Activated CD8-positive, alpha-beta T cell treated with anti-CD3 and anti-CD28 coated beads, Interleukin-2, amount 10 ng/mL, durations not matched to agents 7 days and 5 days (primary cell): ENCODE measurements at regions of chr17 and their contacts with region 1.

Region 1: GRCh38 chr17:49997791-49998703 is 3.0 kb upstream of the DLX3 start:
- DNase-seq: peak; percentile 92
- ATAC-seq: peak; percentile 86
- H3K4me3 Mint-ChIP-seq: no peak overlapping the region
- H3K27ac Mint-ChIP-seq: no peak overlapping the region
- H3K4me1 Mint-ChIP-seq: peaks cover 29% of the 10 kb centered on the region
- H3K27me3 Mint-ChIP-seq: peaks cover 57% of the 10 kb centered on the region

Region 2: GRCh38 chr17:49556223-49556971 is 441.6 kb before region 1 on chr17:
- CTCF ChIA-PET with region 1: interaction called, 39 read pairs
- POLR2A ChIA-PET with region 1: no interaction called
- DNase-seq: peak; percentile 88
- ATAC-seq: peak; percentile 96
- H3K4me3 Mint-ChIP-seq: no peak overlapping the region
- H3K27ac Mint-ChIP-seq: no peak overlapping the region
- H3K4me1 Mint-ChIP-seq: peaks cover 11% of the 10 kb centered on the region
- H3K27me3 Mint-ChIP-seq: peaks cover 15% of the 10 kb centered on the region

Region 3: DNA sequence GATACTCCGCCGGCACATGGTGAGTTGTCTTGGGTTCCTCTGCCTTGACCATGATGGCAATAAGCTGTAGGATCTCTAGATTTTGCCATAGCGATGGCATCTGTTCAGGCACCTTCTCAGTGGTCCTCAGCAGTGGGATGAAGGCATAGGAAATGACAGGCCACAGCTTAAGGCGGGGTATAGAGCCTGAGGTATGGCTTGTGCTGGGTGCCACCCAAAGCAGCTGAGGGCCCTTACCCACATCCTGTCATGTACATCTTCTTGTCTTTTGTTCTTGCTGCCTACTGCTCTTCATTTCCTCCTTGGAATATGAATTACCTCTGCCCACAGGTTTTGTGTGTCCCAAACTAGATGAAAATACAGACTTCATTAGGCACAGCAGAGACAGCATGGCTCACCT is 180.1 kb before region 1 on chr17:
- CTCF ChIA-PET with region 1: interaction called, 11 read pairs
- POLR2A ChIA-PET with region 1: no interaction called
- DNase-seq: peak; percentile 76
- ATAC-seq: peak; percentile 97
- H3K4me3 Mint-ChIP-seq: peak overlapping the region; percentile 68
- H3K27ac Mint-ChIP-seq: peak overlapping the region; percentile 97
- H3K4me1 Mint-ChIP-seq: peaks cover 63% of the 10 kb centered on the region
- H3K27me3 Mint-ChIP-seq: no peaks in the 10 kb centered on the region

Region 4: GRCh38 chr17:49880291-49881053 is 117.6 kb before region 1 on chr17:
- CTCF ChIA-PET with region 1: interaction called, 137 read pairs
- POLR2A ChIA-PET with region 1: no interaction called
- DNase-seq: peak; percentile 80
- ATAC-seq: peak; percentile 98
- H3K4me3 Mint-ChIP-seq: no peak overlapping the region
- H3K27ac Mint-ChIP-seq: no peak overlapping the region
- H3K4me1 Mint-ChIP-seq: peaks cover 8% of the 10 kb centered on the region
- H3K27me3 Mint-ChIP-seq: peaks cover 36% of the 10 kb centered on the region

Region 5: GRCh38 chr17:49910094-49910857 is 87.8 kb before region 1 on chr17:
- CTCF ChIA-PET with region 1: interaction called, 22 read pairs
- POLR2A ChIA-PET with region 1: no interaction called
- DNase-seq: no peak
- ATAC-seq: no peak
- H3K4me3 Mint-ChIP-seq: no peak overlapping the region
- H3K27ac Mint-ChIP-seq: no peak overlapping the region
- H3K4me1 Mint-ChIP-seq: peaks cover 4% of the 10 kb centered on the region
- H3K27me3 Mint-ChIP-seq: peaks cover 54% of the 10 kb centered on the region

Region 6: DNA sequence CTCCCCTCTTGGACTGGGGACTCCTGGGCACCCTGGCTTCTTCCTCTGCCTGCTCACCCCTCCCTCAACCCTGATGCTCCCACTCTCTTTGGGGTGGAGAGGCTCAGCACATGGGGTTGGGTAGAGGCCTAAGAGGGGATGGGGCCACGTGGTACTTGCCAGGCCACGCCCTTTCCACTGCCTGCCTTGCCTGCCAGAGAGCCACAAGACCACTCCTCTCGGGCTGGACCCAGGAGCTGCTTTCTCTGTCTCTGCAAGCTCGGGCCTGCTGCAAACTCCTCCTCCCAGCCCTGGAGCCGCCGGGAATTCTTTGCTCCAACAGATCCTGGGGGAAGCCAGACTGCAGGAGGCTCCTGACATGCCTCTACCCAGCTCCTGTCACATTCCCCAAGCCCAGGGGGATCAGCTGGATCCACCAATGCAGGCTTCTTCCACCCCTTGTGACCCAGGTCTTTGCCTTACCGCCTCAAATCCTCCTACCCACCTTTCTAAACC is 17.3 kb before region 1 on chr17:
- CTCF ChIA-PET with region 1: interaction called, 45 read pairs
- POLR2A ChIA-PET with region 1: interaction called, 5 read pairs
- DNase-seq: no peak
- ATAC-seq: no peak
- H3K4me3 Mint-ChIP-seq: no peak overlapping the region
- H3K27ac Mint-ChIP-seq: no peak overlapping the region
- H3K4me1 Mint-ChIP-seq: no peaks in the 10 kb centered on the region
- H3K27me3 Mint-ChIP-seq: peaks cover 28% of the 10 kb centered on the region

Region 7: DNA sequence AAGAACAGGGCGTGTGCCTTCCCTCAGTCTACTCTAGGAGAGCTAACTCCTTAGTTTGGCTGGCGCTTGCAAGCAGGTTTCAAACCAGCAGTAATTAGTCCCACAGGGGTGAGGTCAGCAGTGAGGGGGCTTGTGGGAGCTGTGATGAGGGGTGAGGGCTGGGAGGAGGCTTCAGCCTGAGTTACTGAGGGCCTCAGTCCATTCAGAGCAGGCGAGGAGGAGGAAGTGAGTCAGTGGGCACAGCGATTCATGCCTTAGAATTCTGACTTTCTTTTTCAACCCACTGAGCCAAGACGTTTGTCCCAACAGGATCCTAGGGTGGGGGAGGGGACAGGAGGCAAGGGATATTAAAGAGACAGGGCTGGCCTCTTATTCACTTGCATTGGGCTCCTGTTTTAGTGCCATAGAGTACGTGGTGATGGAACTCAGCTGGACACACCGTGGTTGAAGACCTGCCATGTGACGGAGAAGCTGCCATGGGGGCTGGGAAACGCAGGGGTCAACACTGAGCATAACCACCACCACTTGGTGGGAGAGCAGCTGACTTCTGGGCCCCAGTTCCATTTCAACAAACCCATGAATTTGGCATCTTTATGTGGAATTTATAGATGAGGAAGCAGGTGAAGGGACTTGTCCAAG is 49.6 kb after region 1 on chr17:
- CTCF ChIA-PET with region 1: no interaction called
- POLR2A ChIA-PET with region 1: no interaction called
- DNase-seq: no peak
- ATAC-seq: no peak
- H3K4me3 Mint-ChIP-seq: no peak overlapping the region
- H3K27ac Mint-ChIP-seq: no peak overlapping the region
- H3K4me1 Mint-ChIP-seq: peaks cover 33% of the 10 kb centered on the region
- H3K27me3 Mint-ChIP-seq: peaks cover 10% of the 10 kb centered on the region

Region 8: GRCh38 chr17:50094753-50095619 is 96.9 kb after region 1 on chr17 and contains the start of gene PDK2:
- CTCF ChIA-PET with region 1: interaction called, 19 read pairs
- POLR2A ChIA-PET with region 1: no interaction called
- DNase-seq: peak; percentile 97
- ATAC-seq: peak; percentile 96
- H3K4me3 Mint-ChIP-seq: peak within 1 kb of the TSS; percentile 86
- H3K27ac Mint-ChIP-seq: peak within 1 kb of the TSS; percentile 87
- H3K4me1 Mint-ChIP-seq: peaks cover 27% of the 10 kb centered on the region
- H3K27me3 Mint-ChIP-seq: peaks cover 2% of the 10 kb centered on the region
- total RNA-seq, gene PDK2: 18.1 to 21.2 TPM

Region 9: DNA sequence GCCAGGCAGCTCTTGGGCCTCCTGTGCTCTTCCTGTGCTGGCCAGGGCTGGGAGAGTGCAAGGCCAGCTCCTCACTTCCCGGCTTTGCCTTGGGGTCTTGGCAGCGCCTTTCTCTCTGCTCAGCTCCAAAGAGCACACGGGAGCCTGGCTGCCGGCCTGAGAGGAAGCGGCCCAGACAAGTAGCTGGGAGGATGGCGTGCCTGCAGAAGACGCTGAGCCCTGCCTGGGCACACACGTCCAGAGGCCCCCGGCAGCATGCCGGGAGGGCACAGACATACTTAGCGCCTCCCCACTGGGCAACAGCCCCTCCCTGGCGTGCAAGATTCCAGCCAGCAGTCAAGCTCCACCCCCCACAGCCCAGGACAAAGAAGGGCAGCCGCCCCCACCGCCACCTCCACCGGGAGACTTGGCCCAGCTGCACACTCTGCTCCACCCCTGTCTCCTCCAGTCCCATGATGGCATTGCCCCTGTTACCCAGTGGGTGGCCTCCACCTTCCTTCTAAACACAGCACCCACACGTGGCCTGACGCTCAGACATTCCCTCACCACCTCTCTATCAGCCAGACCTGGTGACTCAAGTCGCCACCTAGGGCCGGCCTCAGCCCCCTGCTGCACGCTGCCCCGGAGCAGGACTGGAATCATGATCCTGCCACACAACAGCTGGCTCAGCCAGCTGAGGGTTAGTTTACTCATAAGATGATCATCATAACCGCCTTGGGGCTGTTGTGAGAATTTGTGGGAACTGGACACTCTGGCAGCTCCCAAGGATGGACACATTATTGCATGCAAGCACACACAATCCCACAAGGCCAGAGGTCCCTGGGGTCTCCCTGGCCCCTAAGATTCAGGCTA is 180.2 kb after region 1 on chr17:
- CTCF ChIA-PET with region 1: no interaction called
- POLR2A ChIA-PET with region 1: no interaction called
- DNase-seq: peak; percentile 52
- ATAC-seq: peak; percentile 87
- H3K4me3 Mint-ChIP-seq: no peak overlapping the region
- H3K27ac Mint-ChIP-seq: no peak overlapping the region
- H3K4me1 Mint-ChIP-seq: peaks cover 20% of the 10 kb centered on the region
- H3K27me3 Mint-ChIP-seq: no peaks in the 10 kb centered on the region